HepG2 (cell line): ENCODE measurements at regions of chr6 and their contacts with region 1.

Region 1: DNA sequence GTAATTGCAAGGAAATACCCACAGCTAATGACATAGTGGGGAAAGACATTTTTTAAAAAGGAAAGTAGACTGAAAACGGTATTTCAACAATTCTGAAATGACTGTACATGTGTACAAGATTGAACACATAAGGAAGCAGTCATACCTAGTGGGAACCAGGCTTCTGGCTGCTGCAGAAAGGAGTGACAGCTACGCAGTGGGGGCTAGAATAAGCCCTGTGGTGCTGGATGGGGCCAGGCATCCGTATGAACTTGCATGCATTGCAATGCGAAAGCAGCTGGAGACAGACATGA is 54.9 kb upstream of the GPR31 start:
- DNase-seq: no peak
- ATAC-seq: no peak
- H3K4me3 ChIP-seq: no peak overlapping the region
- H3K27ac ChIP-seq: no peak overlapping the region
- H3K4me1 ChIP-seq: peaks cover 81% of the 10 kb centered on the region
- H3K27me3 ChIP-seq: no peaks in the 10 kb centered on the region
- CTCF ChIP-seq: no peak
- EP300 ChIP-seq: no peak
- POLR2A ChIP-seq: no peak
- RAD21 ChIP-seq: no peak

Region 2: DNA sequence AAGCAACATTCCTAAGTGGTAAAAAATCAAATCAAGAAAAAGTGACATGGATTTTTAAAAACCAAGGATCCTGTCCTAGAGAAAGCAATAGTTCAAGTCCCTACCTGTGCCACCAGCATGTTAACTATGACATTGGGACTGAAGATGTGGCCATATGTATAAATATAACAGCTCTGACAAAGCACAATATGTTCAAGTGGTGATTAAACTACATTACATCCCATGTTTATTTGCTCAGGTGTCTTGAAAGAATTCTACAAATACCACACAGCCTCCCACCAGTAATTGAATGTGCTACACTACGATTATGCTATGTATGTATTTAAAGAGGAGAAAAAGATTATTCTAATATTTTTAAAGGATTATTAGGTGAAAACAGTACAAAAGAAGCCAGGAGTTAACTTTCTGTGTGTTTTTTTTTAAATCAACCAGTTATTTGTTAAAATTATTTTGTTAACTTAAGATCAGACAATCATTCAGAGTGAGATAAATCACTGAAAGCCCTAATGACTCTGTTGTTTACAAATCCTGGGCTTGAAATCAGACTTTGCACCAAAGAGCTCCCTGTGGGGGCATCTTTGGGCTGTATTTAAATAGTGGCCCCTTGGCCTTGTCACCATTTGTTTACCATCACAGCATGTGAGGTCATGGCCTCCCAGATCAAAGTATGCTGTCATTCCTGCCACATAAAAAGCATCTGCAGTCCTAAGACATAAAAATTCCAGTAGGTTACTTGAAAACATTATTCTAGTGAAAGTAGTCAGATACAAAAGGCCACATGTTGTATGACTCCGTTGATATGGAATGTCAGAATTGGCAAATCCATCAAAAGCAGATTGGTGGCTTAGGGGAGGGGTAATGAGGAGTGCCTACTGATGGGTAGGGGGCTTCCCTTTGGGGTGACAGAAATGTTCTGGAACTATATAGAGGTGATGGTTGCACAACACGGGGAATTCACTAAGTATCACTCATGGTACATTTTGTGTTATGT is 129.3 kb after region 1 on chr6:
- CTCF ChIA-PET with region 1: no interaction called
- POLR2A ChIA-PET with region 1: interaction called, 18 read pairs
- in situ Hi-C with region 1: no loop called
- intact Hi-C with region 1: no loop called
- DNase-seq: peak; percentile 100
- ATAC-seq: peak; percentile 91
- H3K4me3 ChIP-seq: peak overlapping the region in 1 of 3 experiments; percentile 14; a peak in 1 of 6 replicates
- H3K27ac ChIP-seq: peak overlapping the region; percentile 79
- H3K4me1 ChIP-seq: peaks cover 81% of the 10 kb centered on the region
- H3K27me3 ChIP-seq: no peaks in the 10 kb centered on the region
- CTCF ChIP-seq: 0 out of 2 replicates have a peak, but pooled peaks have one; percentile 20
- EP300 ChIP-seq: peak; percentile 99 to 100
- POLR2A ChIP-seq: 0 out of 4 replicates have a peak, but pooled peaks of 1 of the 2 experiments have one; percentile 24
- RAD21 ChIP-seq: peak; percentile 15; the same call in 1 of the 2 replicates

Region 3: GRCh38 chr6:168180548-168181011 is 967.9 kb after region 1 on chr6:
- CTCF ChIA-PET with region 1: no interaction called
- POLR2A ChIA-PET with region 1: no interaction called
- in situ Hi-C with region 1: no loop called
- intact Hi-C with region 1: no loop called
- DNase-seq: no peak
- ATAC-seq: no peak; the same call in 2 of the 3 replicates
- H3K4me3 ChIP-seq: no peak overlapping the region
- H3K27ac ChIP-seq: no peak overlapping the region
- H3K4me1 ChIP-seq: no peaks in the 10 kb centered on the region
- H3K27me3 ChIP-seq: peaks cover 10 to 71% of the 10 kb centered on the region in 2 experiments; a peak in 4 of 5 replicates
- CTCF ChIP-seq: no peak
- EP300 ChIP-seq: no peak
- POLR2A ChIP-seq: no peak
- RAD21 ChIP-seq: no peak